ENCODE measurements at regions of chr9 and their contacts with region 1.

Region 1: DNA sequence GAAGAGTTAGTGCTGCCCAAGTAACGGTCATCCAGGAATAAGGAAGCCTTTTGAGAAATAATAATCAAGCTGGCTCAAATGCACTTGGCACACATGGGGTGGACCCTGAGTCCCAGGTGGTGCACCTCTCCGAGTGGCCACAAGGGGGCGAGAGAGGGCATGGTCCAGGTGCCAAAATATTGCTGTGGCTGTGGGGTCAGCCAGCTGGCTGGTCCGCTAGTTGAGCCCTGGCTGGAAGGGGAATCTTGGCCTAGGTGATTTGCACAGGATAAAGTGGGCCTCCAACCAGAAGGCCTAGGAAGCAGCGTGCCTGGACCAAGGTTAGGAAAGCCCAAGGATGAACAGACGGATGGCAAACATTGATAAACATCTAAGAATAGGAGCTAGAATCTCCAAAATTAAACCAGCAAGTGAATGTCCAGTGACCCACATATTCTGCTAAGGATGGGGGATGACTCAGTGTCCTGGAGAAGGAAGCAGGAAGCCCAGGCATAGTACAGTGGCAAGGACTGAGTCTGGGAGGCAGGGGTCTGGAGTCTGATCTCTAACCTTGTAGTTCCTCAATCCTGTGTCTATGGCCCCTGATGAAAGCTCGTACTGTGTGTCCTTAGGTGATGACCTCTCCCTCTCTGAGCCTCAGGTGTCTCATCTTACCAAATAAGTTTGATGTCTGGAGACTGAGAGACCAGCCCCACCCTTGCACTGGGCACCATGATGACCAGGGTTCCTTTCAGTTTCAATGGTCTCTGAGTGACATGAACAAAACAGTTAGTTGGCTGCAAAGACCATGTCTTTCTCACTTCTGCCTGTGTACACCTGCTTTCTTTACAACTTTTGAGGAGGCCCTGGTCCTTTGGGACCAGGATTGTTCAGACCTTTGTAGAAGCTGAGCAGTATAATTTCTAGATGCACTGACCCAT is 19.2 kb upstream of the SHB start:
- DNase-seq: peak; percentile 64
- ATAC-seq: peak; percentile 73
- H3K4me3 Mint-ChIP-seq: no peak overlapping the region
- H3K27ac Mint-ChIP-seq: no peak overlapping the region
- H3K4me1 Mint-ChIP-seq: no peaks in the 10 kb centered on the region
- H3K27me3 Mint-ChIP-seq: peaks cover 15% of the 10 kb centered on the region
- CTCF ChIP-seq: peak; percentile 74

Region 2: DNA sequence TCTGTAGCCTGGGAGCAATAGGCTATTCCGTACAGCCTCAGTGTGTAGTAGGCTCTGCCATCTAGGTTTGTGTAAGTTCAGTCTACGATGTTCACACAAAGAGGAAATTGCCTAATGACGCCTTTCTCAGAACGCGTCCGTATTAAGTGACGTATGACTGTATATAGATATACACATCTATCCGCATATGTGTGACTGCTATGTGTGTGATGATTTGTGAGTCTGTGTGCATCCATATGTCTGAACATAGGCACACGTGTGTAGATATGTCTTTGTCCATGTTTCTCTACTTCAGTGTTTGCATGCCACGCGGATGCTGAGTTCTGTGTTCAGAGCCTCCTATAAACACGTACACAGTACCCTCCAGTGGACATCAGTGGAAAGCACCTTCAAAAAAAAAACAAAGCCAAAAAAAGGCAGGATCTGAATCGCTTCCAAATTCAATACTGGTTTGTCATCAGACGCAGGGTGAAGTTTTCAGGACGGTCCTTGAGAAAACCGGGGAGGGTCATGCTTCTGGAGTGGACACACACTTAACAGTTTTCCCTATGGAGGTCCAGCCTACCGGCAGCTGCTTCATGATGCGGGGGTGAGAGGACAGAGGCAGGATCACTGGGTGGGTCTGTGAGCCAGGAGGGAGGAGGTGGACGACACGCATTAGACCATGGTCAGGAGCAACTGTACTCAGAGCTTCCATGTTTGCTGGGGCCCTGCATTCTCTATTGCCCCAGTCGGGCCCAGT is 274.8 kb after region 1 on chr9:
- CTCF ChIA-PET with region 1: interaction called, 4 read pairs
- POLR2A ChIA-PET with region 1: no interaction called
- intact Hi-C with region 1: loop called (anchors 1 kb)
- DNase-seq: no peak
- ATAC-seq: peak; percentile 50
- H3K4me3 Mint-ChIP-seq: peak overlapping the region; percentile 61
- H3K27ac Mint-ChIP-seq: no peak overlapping the region
- H3K4me1 Mint-ChIP-seq: peaks cover 6% of the 10 kb centered on the region
- H3K27me3 Mint-ChIP-seq: peaks cover 9% of the 10 kb centered on the region
- CTCF ChIP-seq: no peak

Region 3: DNA sequence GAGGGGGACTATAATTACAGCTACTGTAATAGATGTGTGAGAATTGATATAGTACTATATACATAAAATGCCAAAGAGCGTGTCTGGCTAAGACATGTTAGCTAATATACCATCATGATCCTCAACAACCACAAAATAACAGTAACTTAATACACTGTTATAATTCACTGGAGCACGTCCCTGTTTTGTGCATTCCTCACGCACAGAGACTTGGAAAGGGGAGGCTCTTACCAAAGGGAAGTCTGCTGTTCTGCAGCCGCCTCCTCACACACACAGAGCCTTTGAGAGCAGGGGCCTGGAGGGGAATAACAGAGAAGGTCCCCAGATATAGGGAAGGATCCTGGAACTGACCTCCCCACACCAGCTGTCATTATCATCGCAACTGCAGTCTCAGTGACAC is 434.9 kb after region 1 on chr9:
- CTCF ChIA-PET with region 1: no interaction called
- POLR2A ChIA-PET with region 1: no interaction called
- intact Hi-C with region 1: no loop called
- DNase-seq: no peak
- ATAC-seq: no peak
- H3K4me3 Mint-ChIP-seq: no peak overlapping the region
- H3K27ac Mint-ChIP-seq: no peak overlapping the region
- H3K4me1 Mint-ChIP-seq: no peaks in the 10 kb centered on the region
- H3K27me3 Mint-ChIP-seq: peaks cover 5% of the 10 kb centered on the region
- CTCF ChIP-seq: no peak

Measured in activated B cell treated with CpG ODN at 0.5 μM for 24 hours (primary cell).